ENCODE measurements at regions of chr22 and their contacts with region 1.

Region 1: DNA sequence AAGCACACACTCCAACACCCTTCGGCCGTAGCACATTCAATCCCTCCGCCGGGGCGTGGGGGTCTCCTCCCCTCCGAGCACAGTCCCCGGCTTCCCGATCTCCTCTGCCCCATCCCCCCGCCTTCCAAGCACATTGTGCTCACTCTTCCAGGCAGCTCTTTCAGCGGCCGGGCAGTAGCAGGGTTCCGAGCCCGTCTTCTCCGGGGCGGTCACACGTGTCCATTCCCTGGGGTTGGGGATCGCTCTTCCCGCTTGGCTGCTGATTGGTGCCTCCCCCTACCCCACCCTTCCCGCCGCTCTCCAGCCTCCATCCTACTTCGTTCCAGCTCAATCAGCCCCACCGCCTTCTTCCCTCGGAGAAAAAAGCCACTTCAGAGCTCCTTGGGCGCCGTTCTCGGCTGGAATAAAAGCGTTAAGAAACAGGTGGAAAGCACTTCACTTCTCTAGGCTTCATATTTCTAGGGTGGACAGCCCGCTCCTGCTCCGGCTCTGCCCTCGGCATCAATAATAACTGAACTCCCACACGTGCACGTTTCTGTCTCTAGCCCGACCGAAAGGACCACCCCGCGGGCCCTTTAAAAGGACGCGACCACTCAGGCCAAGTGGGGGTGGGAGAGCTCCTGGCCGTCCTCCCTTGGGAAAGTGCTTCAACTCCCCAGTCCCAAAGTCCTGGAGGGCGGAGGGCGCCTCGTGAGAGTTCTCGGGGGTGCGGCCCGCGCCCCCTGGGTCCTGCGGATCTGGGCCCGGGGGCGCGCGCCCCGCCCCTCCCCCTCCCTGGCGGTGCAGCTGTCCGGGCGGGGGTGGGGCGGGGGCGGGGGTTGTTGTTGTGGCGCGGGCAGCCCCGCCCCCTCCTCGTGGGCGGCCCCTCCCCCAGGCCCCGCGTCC is 464 bp upstream of the CECR2 start:
- DNase-seq: peak; percentile 44
- ATAC-seq: peak; percentile 56
- H3K4me3 Mint-ChIP-seq: peak overlapping the region; percentile 80
- H3K27ac Mint-ChIP-seq: peak overlapping the region; percentile 10
- H3K4me1 Mint-ChIP-seq: peaks cover 27% of the 10 kb centered on the region
- H3K27me3 Mint-ChIP-seq: peaks cover 39% of the 10 kb centered on the region
- CTCF ChIP-seq: no peak

Region 2: DNA sequence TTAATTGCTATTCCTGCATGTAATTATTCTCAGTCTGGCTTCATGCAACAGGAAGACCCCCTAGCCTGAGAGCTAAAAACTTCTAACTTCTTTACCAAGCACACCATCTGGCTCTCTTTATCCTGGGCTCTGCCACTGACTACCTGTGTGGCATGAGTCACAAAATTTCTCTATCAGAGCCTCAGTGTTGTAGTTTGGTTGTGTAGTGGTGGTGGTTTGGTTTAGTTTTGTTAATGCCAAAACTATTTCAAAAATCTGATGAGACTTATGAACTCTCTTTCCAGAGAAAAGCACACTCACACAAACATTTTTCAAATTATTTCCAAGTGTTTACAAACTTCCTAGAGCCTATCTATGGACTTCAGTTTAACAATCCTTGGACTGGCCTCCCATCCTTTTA is 291.5 kb before region 1 on chr22:
- CTCF ChIA-PET with region 1: no interaction called
- POLR2A ChIA-PET with region 1: no interaction called
- intact Hi-C with region 1: loop called (anchors 5 kb)
- DNase-seq: no peak
- ATAC-seq: no peak
- H3K4me3 Mint-ChIP-seq: no peak overlapping the region
- H3K27ac Mint-ChIP-seq: no peak overlapping the region
- H3K4me1 Mint-ChIP-seq: peaks cover 3% of the 10 kb centered on the region
- H3K27me3 Mint-ChIP-seq: no peaks in the 10 kb centered on the region
- CTCF ChIP-seq: no peak

Region 3: GRCh38 chr22:17205432-17205831 is 163.4 kb before region 1 on chr22:
- CTCF ChIA-PET with region 1: interaction called, 3 read pairs
- POLR2A ChIA-PET with region 1: no interaction called
- intact Hi-C with region 1: loop called (anchors 1 kb)
- DNase-seq: no peak
- ATAC-seq: peak; percentile 66
- H3K4me3 Mint-ChIP-seq: no peak overlapping the region
- H3K27ac Mint-ChIP-seq: peak overlapping the region; percentile 56
- H3K4me1 Mint-ChIP-seq: no peaks in the 10 kb centered on the region
- H3K27me3 Mint-ChIP-seq: no peaks in the 10 kb centered on the region
- CTCF ChIP-seq: no peak

Region 4: DNA sequence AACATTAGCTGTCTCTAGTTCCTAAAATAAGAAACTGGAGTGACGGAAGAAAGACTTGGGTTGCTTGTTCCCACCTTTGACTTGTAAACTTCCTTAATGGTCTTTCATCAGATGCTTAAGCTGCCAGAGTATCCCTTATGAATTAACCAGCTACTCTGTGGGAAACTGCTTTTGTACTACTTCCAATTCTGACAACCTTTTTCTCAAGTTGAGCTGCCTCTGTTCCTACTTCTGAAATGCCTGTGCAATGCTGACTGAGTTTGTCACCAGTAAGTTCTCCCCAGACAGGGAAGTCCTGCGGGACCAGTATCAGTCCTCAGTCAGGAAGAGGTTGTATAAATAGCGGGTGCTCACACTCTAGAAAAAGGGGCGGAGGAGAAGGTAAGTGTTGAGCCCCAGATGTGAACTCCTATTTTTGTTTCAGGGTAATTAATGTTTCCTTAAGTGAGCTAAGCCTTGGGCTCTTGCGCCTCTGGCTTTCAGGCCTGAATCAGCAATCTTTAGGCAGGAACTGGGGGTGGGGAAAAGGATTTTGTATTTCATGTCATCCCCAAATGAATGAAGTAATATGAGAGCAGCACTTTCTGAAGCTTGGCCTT is 67.7 kb after region 1 on chr22:
- CTCF ChIA-PET with region 1: no interaction called
- POLR2A ChIA-PET with region 1: no interaction called
- intact Hi-C with region 1: loop called (anchors 10 kb)
- DNase-seq: no peak
- ATAC-seq: no peak
- H3K4me3 Mint-ChIP-seq: no peak overlapping the region
- H3K27ac Mint-ChIP-seq: no peak overlapping the region
- H3K4me1 Mint-ChIP-seq: peaks cover 20% of the 10 kb centered on the region
- H3K27me3 Mint-ChIP-seq: peaks cover 8% of the 10 kb centered on the region
- CTCF ChIP-seq: no peak

Measured in activated B cell treated with CpG ODN at 0.5 μM for 24 hours (primary cell).